ENCODE measurements at regions of chr5 and their contacts with region 1.

Region 1: GRCh38 chr5:55936100-55936693 is 58.6 kb downstream of the IL6ST start:
- DNase-seq: peak; percentile 64 to 90 (median 71)
- ATAC-seq: peak; percentile 77
- H3K4me3 ChIP-seq: no peak overlapping the region
- H3K4me3 Mint-ChIP-seq: peak overlapping the region; percentile 25
- H3K27ac ChIP-seq: no peak overlapping the region
- H3K27ac Mint-ChIP-seq: peak overlapping the region; percentile 62
- H3K4me1 ChIP-seq: no peaks in the 10 kb centered on the region
- H3K4me1 Mint-ChIP-seq: peaks cover 46% of the 10 kb centered on the region
- H3K27me3 ChIP-seq: no peaks in the 10 kb centered on the region
- H3K27me3 Mint-ChIP-seq: no peaks in the 10 kb centered on the region
- CTCF ChIP-seq: peak; percentile 84

Region 2: DNA sequence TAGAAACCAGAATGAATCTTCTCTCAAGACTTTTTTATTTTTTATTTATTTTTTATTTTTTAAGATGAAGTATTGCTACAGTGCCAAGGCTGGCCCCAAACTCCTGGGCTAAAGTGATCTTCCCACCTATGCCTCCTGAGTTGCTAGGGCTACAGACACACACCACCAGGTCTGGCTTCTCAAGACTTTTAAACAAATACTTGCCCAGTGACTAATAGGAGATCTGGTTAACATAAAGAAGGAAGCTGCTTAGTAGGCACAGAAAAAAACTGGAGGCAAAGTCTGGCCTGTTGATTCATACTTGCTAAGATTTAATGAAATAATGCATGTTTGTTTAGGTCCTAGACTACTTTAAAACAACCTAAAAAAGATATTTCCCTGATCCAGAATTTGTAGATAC is 267.8 kb before region 1 on chr5:
- CTCF ChIA-PET with region 1: no interaction called
- POLR2A ChIA-PET with region 1: no interaction called
- intact Hi-C with region 1: no loop called
- DNase-seq: no peak
- ATAC-seq: no peak
- H3K4me3 ChIP-seq: no peak overlapping the region
- H3K4me3 Mint-ChIP-seq: no peak overlapping the region
- H3K27ac ChIP-seq: no peak overlapping the region
- H3K27ac Mint-ChIP-seq: no peak overlapping the region
- H3K4me1 ChIP-seq: no peaks in the 10 kb centered on the region
- H3K4me1 Mint-ChIP-seq: no peaks in the 10 kb centered on the region
- H3K27me3 ChIP-seq: no peaks in the 10 kb centered on the region
- H3K27me3 Mint-ChIP-seq: no peaks in the 10 kb centered on the region
- CTCF ChIP-seq: no peak

Region 3: GRCh38 chr5:55836191-55836590 is 100.0 kb before region 1 on chr5:
- CTCF ChIA-PET with region 1: no interaction called
- POLR2A ChIA-PET with region 1: no interaction called
- intact Hi-C with region 1: no loop called
- DNase-seq: no peak
- ATAC-seq: no peak
- H3K4me3 ChIP-seq: no peak overlapping the region
- H3K4me3 Mint-ChIP-seq: no peak overlapping the region
- H3K27ac ChIP-seq: no peak overlapping the region
- H3K27ac Mint-ChIP-seq: no peak overlapping the region
- H3K4me1 ChIP-seq: no peaks in the 10 kb centered on the region
- H3K4me1 Mint-ChIP-seq: no peaks in the 10 kb centered on the region
- H3K27me3 ChIP-seq: no peaks in the 10 kb centered on the region
- H3K27me3 Mint-ChIP-seq: peaks cover 4% of the 10 kb centered on the region
- CTCF ChIP-seq: no peak

Region 4: DNA sequence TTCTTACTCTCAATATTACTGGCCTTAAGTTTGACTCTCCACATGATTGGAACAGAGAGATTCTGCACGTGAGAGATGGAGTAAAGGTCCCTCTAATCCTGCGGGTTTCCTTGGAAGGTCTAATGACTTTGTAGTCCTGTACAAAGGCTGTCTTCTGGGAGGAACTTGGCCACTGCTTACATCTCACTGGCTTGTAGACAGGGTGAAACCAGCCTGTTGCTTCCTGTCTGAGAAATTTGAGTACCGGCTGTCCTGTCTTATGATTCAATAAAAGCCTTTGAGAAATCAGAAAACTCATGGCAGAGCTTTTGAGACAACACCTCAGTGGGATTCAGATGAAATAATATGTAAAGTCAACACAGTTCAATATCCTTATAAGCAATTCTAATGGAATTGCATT is 42.1 kb before region 1 on chr5:
- CTCF ChIA-PET with region 1: no interaction called
- POLR2A ChIA-PET with region 1: no interaction called
- intact Hi-C with region 1: no loop called
- DNase-seq: no peak
- ATAC-seq: no peak
- H3K4me3 ChIP-seq: no peak overlapping the region
- H3K4me3 Mint-ChIP-seq: no peak overlapping the region
- H3K27ac ChIP-seq: no peak overlapping the region
- H3K27ac Mint-ChIP-seq: no peak overlapping the region
- H3K4me1 ChIP-seq: peaks cover 5% of the 10 kb centered on the region
- H3K4me1 Mint-ChIP-seq: no peaks in the 10 kb centered on the region
- H3K27me3 ChIP-seq: peaks cover 0 to 2% of the 10 kb centered on the region in 2 experiments
- H3K27me3 Mint-ChIP-seq: peaks cover 7% of the 10 kb centered on the region
- CTCF ChIP-seq: no peak

Region 5: DNA sequence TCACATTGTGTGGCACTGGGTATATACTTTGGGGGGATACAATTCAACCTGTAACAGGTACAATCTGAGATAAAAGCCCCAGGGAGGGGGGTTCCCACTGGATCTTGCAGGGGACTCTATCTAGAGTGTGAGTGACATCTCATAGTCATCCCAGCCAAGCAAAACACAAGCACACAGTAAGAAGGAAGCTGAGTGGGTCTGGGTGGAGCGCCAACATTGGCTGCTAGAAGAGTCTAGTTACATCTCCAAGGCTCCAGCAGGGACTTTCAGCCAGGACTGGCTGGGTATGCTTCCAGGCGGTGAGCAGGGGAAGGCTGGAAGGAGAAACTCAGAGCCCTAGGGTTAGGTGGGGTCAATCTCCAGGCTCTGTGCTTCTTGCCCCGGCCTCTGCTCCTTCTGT is 32.0 kb before region 1 on chr5:
- CTCF ChIA-PET with region 1: no interaction called
- POLR2A ChIA-PET with region 1: no interaction called
- intact Hi-C with region 1: no loop called
- DNase-seq: peak in 1 of 14 experiments; percentile 23
- ATAC-seq: no peak
- H3K4me3 ChIP-seq: no peak overlapping the region
- H3K4me3 Mint-ChIP-seq: no peak overlapping the region
- H3K27ac ChIP-seq: no peak overlapping the region
- H3K27ac Mint-ChIP-seq: no peak overlapping the region
- H3K4me1 ChIP-seq: peaks cover 25% of the 10 kb centered on the region
- H3K4me1 Mint-ChIP-seq: peaks cover 18% of the 10 kb centered on the region
- H3K27me3 ChIP-seq: no peaks in the 10 kb centered on the region
- H3K27me3 Mint-ChIP-seq: peaks cover 7% of the 10 kb centered on the region
- CTCF ChIP-seq: no peak

Region 6: GRCh38 chr5:55969956-55970355 is 33.8 kb after region 1 on chr5:
- CTCF ChIA-PET with region 1: interaction called, 5 read pairs
- POLR2A ChIA-PET with region 1: no interaction called
- intact Hi-C with region 1: loop called (anchors 2 to 5 kb)
- DNase-seq: no peak
- ATAC-seq: no peak
- H3K4me3 ChIP-seq: no peak overlapping the region
- H3K4me3 Mint-ChIP-seq: peak overlapping the region; percentile 55
- H3K27ac ChIP-seq: peak overlapping the region in 1 of 2 donors; percentile 29
- H3K27ac Mint-ChIP-seq: peak overlapping the region; percentile 10
- H3K4me1 ChIP-seq: peaks cover 20% of the 10 kb centered on the region
- H3K4me1 Mint-ChIP-seq: peaks cover 70% of the 10 kb centered on the region
- H3K27me3 ChIP-seq: no peaks in the 10 kb centered on the region
- H3K27me3 Mint-ChIP-seq: no peaks in the 10 kb centered on the region
- CTCF ChIP-seq: no peak

Region 7: GRCh38 chr5:55982957-55983381 is 46.8 kb after region 1 on chr5:
- CTCF ChIA-PET with region 1: interaction called, 6 read pairs
- POLR2A ChIA-PET with region 1: interaction called, 3 read pairs
- intact Hi-C with region 1: loop called in 1 of 2 experiments (anchors 5 kb)
- DNase-seq: peak in 7 of 14 experiments; percentile 18 to 71 (median 38)
- ATAC-seq: peak; percentile 44
- H3K4me3 ChIP-seq: peak overlapping the region; percentile 11
- H3K4me3 Mint-ChIP-seq: peak overlapping the region; percentile 72
- H3K27ac ChIP-seq: peak overlapping the region in 1 of 2 donors; percentile 10
- H3K27ac Mint-ChIP-seq: peak overlapping the region; percentile 94
- H3K4me1 ChIP-seq: peaks cover 31% of the 10 kb centered on the region
- H3K4me1 Mint-ChIP-seq: peaks cover 90% of the 10 kb centered on the region
- H3K27me3 ChIP-seq: no peaks in the 10 kb centered on the region
- H3K27me3 Mint-ChIP-seq: no peaks in the 10 kb centered on the region
- CTCF ChIP-seq: peak; percentile 66

Region 8: DNA sequence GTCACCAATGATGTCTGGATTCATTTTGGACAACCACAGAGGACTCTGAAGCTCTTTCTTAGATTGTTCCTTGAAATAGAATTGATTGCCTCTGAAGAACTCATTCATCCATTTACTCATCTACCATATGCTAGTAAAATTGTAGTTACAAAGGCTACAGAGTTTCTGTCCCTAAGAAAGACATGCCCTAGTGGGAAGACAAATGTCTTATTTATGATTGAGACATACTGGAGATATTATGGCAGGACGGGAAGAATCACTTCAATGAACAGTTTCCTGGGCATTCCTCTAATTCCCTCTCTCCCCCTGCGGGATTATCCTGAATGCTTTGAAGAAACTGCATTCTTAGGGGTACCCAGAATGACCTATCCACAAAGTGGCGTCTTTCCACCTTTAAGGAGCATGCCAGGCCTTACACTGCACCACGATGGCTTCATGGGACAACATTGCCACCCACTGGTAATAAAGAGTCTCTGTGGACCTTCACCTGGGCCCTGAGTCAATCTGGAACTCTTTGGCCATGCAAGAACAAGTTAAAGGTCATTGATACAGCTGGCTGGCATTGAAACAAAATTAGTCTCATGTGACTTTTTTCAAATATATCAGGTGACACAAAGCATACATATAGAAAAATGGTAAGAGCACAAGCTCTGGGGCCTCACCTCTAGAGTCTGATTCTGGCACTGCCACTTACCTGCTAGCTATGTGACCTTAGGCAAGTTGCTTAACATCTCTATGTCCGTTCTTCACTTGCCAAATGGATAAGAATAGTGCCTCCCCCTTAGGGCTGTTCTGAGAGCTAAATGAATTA is 264.9 kb after region 1 on chr5:
- CTCF ChIA-PET with region 1: interaction called, 22 read pairs
- POLR2A ChIA-PET with region 1: interaction called, 4 read pairs
- intact Hi-C with region 1: loop called (anchors 1 kb)
- DNase-seq: peak; percentile 39 to 86 (median 50)
- ATAC-seq: peak; percentile 95
- H3K4me3 ChIP-seq: no peak overlapping the region
- H3K4me3 Mint-ChIP-seq: no peak overlapping the region
- H3K27ac ChIP-seq: no peak overlapping the region
- H3K27ac Mint-ChIP-seq: peak overlapping the region; percentile 2
- H3K4me1 ChIP-seq: peaks cover 6% of the 10 kb centered on the region
- H3K4me1 Mint-ChIP-seq: peaks cover 34% of the 10 kb centered on the region
- H3K27me3 ChIP-seq: no peaks in the 10 kb centered on the region
- H3K27me3 Mint-ChIP-seq: no peaks in the 10 kb centered on the region
- CTCF ChIP-seq: peak; percentile 85

Region 9: DNA sequence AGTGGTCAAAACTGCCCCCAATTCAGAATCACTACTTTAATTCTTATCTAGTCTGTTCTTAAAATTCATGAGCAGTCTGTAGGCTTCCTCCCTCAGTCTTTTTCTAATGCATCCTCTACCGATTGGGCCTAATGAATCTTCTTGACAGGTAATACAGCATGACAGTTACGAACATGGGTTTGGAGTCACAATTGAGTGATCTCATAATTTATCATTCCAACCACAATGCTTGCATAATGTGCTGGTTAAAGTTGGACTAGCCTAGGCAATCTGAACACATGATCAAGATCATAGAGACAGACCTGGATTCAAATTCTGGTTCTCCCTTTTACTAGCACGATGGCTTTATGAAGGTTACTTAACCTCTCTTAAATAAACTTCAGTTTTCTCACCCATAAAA is 940.1 kb after region 1 on chr5:
- CTCF ChIA-PET with region 1: no interaction called
- POLR2A ChIA-PET with region 1: no interaction called
- intact Hi-C with region 1: loop called in 1 of 2 experiments (anchors 10 kb)
- DNase-seq: no peak
- ATAC-seq: no peak
- H3K4me3 ChIP-seq: no peak overlapping the region
- H3K4me3 Mint-ChIP-seq: no peak overlapping the region
- H3K27ac ChIP-seq: no peak overlapping the region
- H3K27ac Mint-ChIP-seq: peak overlapping the region; percentile 65
- H3K4me1 ChIP-seq: peaks cover 2% of the 10 kb centered on the region
- H3K4me1 Mint-ChIP-seq: peaks cover 44% of the 10 kb centered on the region
- H3K27me3 ChIP-seq: no peaks in the 10 kb centered on the region
- H3K27me3 Mint-ChIP-seq: no peaks in the 10 kb centered on the region
- CTCF ChIP-seq: no peak